ENCODE measurements at regions of chr15 and their contacts with region 1.

Region 1: GRCh38 chr15:31200735-31201151 is 99.2 kb upstream of the TRPM1 start:
- DNase-seq: peak; percentile 46
- ATAC-seq: peak; percentile 83
- H3K4me3 ChIP-seq: no peak overlapping the region
- H3K27ac ChIP-seq: no peak overlapping the region
- H3K4me1 ChIP-seq: peaks cover 20% of the 10 kb centered on the region; the same call in 1 of the 2 replicates
- H3K27me3 ChIP-seq: peaks cover 1 to 20% of the 10 kb centered on the region in 2 experiments; a peak in 3 of 5 replicates
- CTCF ChIP-seq: peak; percentile 93
- EP300 ChIP-seq: no peak
- POLR2A ChIP-seq: no peak
- RAD21 ChIP-seq: peak; percentile 72

Region 2: GRCh38 chr15:31136016-31136415 is 64.7 kb before region 1 on chr15:
- CTCF ChIA-PET with region 1: no interaction called
- POLR2A ChIA-PET with region 1: no interaction called
- in situ Hi-C with region 1: no loop called
- intact Hi-C with region 1: loop called (anchors 10 kb)
- DNase-seq: peak; percentile 28
- ATAC-seq: peak; percentile 86
- H3K4me3 ChIP-seq: no peak overlapping the region
- H3K27ac ChIP-seq: no peak overlapping the region
- H3K4me1 ChIP-seq: peaks cover 13% of the 10 kb centered on the region
- H3K27me3 ChIP-seq: 0 out of 5 replicates have a peak, but pooled peaks cover 0 to 1% of the 10 kb centered on the region in 2 experiments
- CTCF ChIP-seq: peak; percentile 46
- EP300 ChIP-seq: no peak
- POLR2A ChIP-seq: no peak
- RAD21 ChIP-seq: no peak

Region 3: GRCh38 chr15:31254431-31255175 is 53.9 kb after region 1 on chr15:
- CTCF ChIA-PET with region 1: no interaction called
- POLR2A ChIA-PET with region 1: no interaction called
- in situ Hi-C with region 1: no loop called
- intact Hi-C with region 1: no loop called
- DNase-seq: no peak
- ATAC-seq: no peak
- H3K4me3 ChIP-seq: no peak overlapping the region
- H3K27ac ChIP-seq: no peak overlapping the region
- H3K4me1 ChIP-seq: no peaks in the 10 kb centered on the region
- H3K27me3 ChIP-seq: peaks cover 0 to 2% of the 10 kb centered on the region in 2 experiments; a peak in 2 of 5 replicates
- CTCF ChIP-seq: no peak
- EP300 ChIP-seq: no peak
- POLR2A ChIP-seq: no peak
- RAD21 ChIP-seq: no peak

Region 4: DNA sequence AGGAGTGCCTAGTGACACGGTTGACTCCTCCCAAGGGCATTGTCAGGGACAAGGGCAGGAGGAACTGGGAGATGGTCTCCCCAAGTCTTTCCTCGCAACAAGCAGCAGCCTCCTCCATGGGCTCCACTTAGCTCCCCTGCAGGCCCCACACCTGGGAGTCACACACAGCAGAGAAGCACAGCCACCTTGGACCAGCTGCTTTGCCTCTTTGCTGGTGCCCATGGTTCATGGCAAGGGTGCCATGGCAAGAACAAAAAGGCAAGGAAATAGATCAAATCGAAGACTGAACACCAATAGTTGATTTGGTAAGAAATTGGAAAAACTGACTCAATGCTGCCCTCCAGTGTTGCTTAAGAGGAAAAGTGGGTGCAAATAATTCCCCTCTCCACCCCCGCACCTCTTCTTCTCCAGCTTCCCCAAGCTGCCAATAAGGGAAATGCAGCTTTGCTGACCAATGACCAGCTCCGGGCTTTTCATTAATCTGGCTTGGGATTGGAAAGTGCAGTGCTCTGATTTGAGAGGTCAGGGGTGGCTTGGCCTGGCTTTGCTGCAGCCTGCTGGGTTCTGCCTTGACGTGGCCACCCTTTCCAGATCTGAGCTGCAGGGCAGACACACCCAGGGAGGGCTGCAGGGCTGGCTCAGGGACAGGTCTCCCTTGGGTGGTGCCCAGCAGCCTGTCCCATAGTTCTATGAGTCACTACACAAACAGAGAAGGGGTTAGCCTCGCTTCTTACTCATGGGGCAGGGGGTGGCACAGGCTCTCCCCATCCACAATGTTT is 287.9 kb after region 1 on chr15:
- CTCF ChIA-PET with region 1: interaction called, 34 read pairs
- POLR2A ChIA-PET with region 1: interaction called, 3 read pairs
- in situ Hi-C with region 1: no loop called
- intact Hi-C with region 1: loop called (anchors 1 kb)
- DNase-seq: peak; percentile 64
- ATAC-seq: peak; percentile 86
- H3K4me3 ChIP-seq: no peak overlapping the region
- H3K27ac ChIP-seq: no peak overlapping the region
- H3K4me1 ChIP-seq: no peaks in the 10 kb centered on the region
- H3K27me3 ChIP-seq: no peaks in the 10 kb centered on the region; a peak in 2 of 5 replicates
- CTCF ChIP-seq: peak; percentile 70
- EP300 ChIP-seq: no peak
- POLR2A ChIP-seq: no peak
- RAD21 ChIP-seq: peak; percentile 52; the same call in 1 of the 2 replicates

Measured in HepG2 (cell line).